ENCODE measurements at regions of chr3 and their contacts with region 1.

Region 1: GRCh38 chr3:54870423-54870822 is 57.4 kb downstream of the LRTM1 start:
- DNase-seq: peak; percentile 77
- H3K4me3 Mint-ChIP-seq: no peak overlapping the region
- H3K27ac Mint-ChIP-seq: no peak overlapping the region
- H3K4me1 Mint-ChIP-seq: peaks cover 41% of the 10 kb centered on the region
- H3K27me3 Mint-ChIP-seq: no peaks in the 10 kb centered on the region
- CTCF ChIP-seq: peak; percentile 69

Region 2: DNA sequence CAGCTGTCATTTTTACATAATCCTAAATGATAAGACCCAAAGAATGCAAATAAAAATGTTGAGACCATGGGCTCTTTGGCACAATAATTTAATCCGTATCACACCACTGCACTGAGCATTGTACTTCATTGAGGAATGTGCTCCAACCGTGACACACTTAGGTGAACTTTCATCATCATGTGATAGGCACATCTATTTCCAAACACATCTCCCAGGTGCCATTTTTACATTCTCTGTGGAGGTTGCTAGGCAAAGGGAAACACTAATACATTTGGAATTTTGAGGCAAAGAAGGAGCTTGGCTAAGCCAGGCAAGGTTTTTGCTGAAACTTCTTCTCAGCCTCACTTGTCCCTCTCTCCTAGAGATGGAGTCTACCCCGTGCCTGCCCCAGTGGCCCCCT is 11.2 kb before region 1 on chr3:
- CTCF ChIA-PET with region 1: interaction called, 18 read pairs
- POLR2A ChIA-PET with region 1: interaction called, 4 read pairs
- intact Hi-C with region 1: no loop called
- DNase-seq: peak; percentile 57
- H3K4me3 Mint-ChIP-seq: no peak overlapping the region
- H3K27ac Mint-ChIP-seq: peak overlapping the region; percentile 78
- H3K4me1 Mint-ChIP-seq: peaks cover 36% of the 10 kb centered on the region
- H3K27me3 Mint-ChIP-seq: no peaks in the 10 kb centered on the region
- CTCF ChIP-seq: no peak

Region 3: GRCh38 chr3:54891548-54892120 is 21.2 kb after region 1 on chr3:
- CTCF ChIA-PET with region 1: interaction called, 9 read pairs
- POLR2A ChIA-PET with region 1: interaction called, 5 read pairs
- intact Hi-C with region 1: loop called (anchors 1 kb)
- DNase-seq: peak; percentile 99
- H3K4me3 Mint-ChIP-seq: peak overlapping the region; percentile 51
- H3K27ac Mint-ChIP-seq: peak overlapping the region; percentile 85
- H3K4me1 Mint-ChIP-seq: peaks cover 44% of the 10 kb centered on the region
- H3K27me3 Mint-ChIP-seq: no peaks in the 10 kb centered on the region
- CTCF ChIP-seq: peak; percentile 42

Region 4: GRCh38 chr3:54951405-54951804 is 81.0 kb after region 1 on chr3:
- CTCF ChIA-PET with region 1: no interaction called
- POLR2A ChIA-PET with region 1: no interaction called
- intact Hi-C with region 1: loop called (anchors 1 kb)
- DNase-seq: peak; percentile 78
- H3K4me3 Mint-ChIP-seq: no peak overlapping the region
- H3K27ac Mint-ChIP-seq: no peak overlapping the region
- H3K4me1 Mint-ChIP-seq: peaks cover 20% of the 10 kb centered on the region
- H3K27me3 Mint-ChIP-seq: no peaks in the 10 kb centered on the region
- CTCF ChIP-seq: peak; percentile 50

Region 5: DNA sequence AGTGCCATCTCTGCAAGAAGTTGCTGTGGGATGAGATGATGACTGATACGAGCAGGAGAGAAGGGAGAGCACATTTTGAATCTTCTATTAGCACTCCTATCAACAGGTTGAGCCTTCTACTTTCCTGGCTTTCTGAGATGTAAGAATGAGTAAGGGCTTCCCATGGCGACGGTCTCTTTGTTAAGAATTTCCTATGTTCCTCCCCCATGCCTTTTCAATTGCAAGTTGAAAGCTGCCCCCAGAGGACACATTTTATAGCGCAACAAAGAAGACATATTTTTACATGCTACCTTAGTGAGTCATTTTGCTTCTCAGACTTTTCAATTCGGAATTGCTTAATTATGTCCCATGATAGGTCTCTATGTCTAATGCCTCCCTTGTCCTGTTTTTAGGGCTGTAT is 128.7 kb after region 1 on chr3:
- CTCF ChIA-PET with region 1: interaction called, 7 read pairs
- POLR2A ChIA-PET with region 1: no interaction called
- intact Hi-C with region 1: loop called (anchors 5 kb)
- DNase-seq: peak; percentile 85
- H3K4me3 Mint-ChIP-seq: no peak overlapping the region
- H3K27ac Mint-ChIP-seq: peak overlapping the region; percentile 31
- H3K4me1 Mint-ChIP-seq: peaks cover 14% of the 10 kb centered on the region
- H3K27me3 Mint-ChIP-seq: no peaks in the 10 kb centered on the region
- CTCF ChIP-seq: peak; percentile 25

Region 6: GRCh38 chr3:55042591-55042990 is 172.2 kb after region 1 on chr3:
- CTCF ChIA-PET with region 1: no interaction called
- POLR2A ChIA-PET with region 1: no interaction called
- intact Hi-C with region 1: loop called (anchors 5 kb)
- DNase-seq: peak; percentile 26
- H3K4me3 Mint-ChIP-seq: no peak overlapping the region
- H3K27ac Mint-ChIP-seq: no peak overlapping the region
- H3K4me1 Mint-ChIP-seq: no peaks in the 10 kb centered on the region
- H3K27me3 Mint-ChIP-seq: no peaks in the 10 kb centered on the region
- CTCF ChIP-seq: peak; percentile 30

Region 7: DNA sequence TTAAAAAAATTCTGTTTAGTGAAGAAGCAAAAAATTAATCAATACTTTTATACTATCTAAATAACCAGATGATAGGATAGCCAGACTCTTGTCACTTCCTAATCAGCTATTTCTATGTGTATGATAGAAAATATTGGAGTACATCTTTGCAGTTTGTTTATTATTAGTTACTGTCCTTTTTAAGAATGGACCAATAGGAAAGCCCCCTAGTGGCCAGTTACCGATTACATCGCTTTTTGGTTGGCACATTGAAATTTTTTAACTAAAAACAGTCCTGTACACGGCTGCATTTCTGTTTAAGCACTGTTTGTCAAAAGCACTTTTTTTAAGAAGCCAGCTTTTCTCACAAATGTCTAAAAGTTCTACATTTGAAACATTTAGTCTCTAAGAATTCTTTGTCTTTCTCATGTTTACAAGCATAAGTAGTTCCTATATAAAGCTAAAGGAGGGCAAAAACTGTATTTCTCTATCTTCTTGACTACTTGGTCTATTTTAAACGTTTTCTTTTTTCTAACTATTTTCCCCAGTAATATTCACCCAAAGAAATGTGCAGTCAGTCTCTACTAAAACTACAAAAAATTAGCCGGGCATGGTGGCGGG is 310.6 kb after region 1 on chr3:
- CTCF ChIA-PET with region 1: interaction called, 18 read pairs
- POLR2A ChIA-PET with region 1: interaction called, 3 read pairs
- intact Hi-C with region 1: loop called (anchors 2 kb)
- DNase-seq: peak; percentile 63
- H3K4me3 Mint-ChIP-seq: no peak overlapping the region
- H3K27ac Mint-ChIP-seq: no peak overlapping the region
- H3K4me1 Mint-ChIP-seq: peaks cover 11% of the 10 kb centered on the region
- H3K27me3 Mint-ChIP-seq: no peaks in the 10 kb centered on the region
- CTCF ChIP-seq: peak; percentile 56

Measured in MCF 10A (cell line).